Sigmoid colon (tissue), 7 donors: ENCODE measurements at regions of chr11 and their contacts with region 1.

Region 1: GRCh38 chr11:19116971-19117750 is at the start of gene ZDHHC13:
- DNase-seq: peak; percentile 95
- H3K4me3 ChIP-seq: peak within 1 kb of the TSS; percentile 84 to 95 (median 92)
- H3K27ac ChIP-seq: peak within 1 kb of the TSS; percentile 47 to 77 (median 62)
- H3K4me1 ChIP-seq: peaks cover 0 to 23% (median 3%) of the 10 kb centered on the region in 4 donors
- H3K27me3 ChIP-seq: no peaks in the 10 kb centered on the region
- CTCF ChIP-seq: no peak
- EP300 ChIP-seq: no peak
- POLR2A ChIP-seq: peak in 1 of 2 donors; percentile 30
- total RNA-seq, gene ZDHHC13: 7.2 to 8.7 (median 7.9) TPM

Region 2: GRCh38 chr11:18243783-18244362 is 873.3 kb before region 1 on chr11:
- intact Hi-C with region 1: no loop called
- DNase-seq: no peak
- H3K4me3 ChIP-seq: no peak overlapping the region
- H3K27ac ChIP-seq: no peak overlapping the region
- H3K4me1 ChIP-seq: no peaks in the 10 kb centered on the region
- H3K27me3 ChIP-seq: no peaks in the 10 kb centered on the region
- CTCF ChIP-seq: peak in 2 of 4 experiments; percentile 8 to 43
- EP300 ChIP-seq: no peak
- POLR2A ChIP-seq: no peak

Region 3: GRCh38 chr11:19076744-19077589 is 40.2 kb before region 1 on chr11:
- intact Hi-C with region 1: loop called (anchors 2 kb)
- DNase-seq: no peak
- H3K4me3 ChIP-seq: no peak overlapping the region
- H3K27ac ChIP-seq: no peak overlapping the region
- H3K4me1 ChIP-seq: peaks cover 0 to 9% (median 9%) of the 10 kb centered on the region in 4 donors
- H3K27me3 ChIP-seq: no peaks in the 10 kb centered on the region
- CTCF ChIP-seq: peak; percentile 45 to 98 (median 78)
- EP300 ChIP-seq: no peak
- POLR2A ChIP-seq: no peak

Region 4: DNA sequence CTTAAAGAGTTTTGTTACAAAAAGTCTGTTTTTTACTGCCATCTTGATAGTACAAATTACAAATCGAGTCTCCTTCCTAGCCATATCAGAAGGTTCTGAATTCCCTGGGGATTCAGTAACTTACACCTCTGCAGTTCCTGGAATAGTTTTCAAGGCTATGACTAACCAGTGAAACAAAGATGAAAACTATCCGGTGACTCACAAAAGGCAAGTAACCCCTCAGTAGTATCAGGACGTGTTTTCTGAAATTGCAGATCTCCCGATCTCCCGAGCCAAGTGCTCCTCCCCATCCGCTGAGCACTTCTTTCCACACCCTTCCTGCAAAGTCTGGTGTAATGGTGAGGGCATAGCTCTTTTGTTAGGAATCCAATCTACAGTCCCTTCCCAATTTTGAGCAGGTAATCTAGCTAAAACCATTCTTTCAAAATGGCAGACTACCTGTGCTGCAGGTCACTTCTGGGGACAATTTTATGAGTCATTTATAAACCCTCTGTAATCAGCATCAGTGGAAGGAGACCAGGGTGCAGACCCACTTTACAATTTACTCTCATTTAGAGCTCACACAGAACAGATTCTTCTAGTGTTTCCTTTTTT is 115.8 kb after region 1 on chr11:
- intact Hi-C with region 1: loop called (anchors 10 kb)
- DNase-seq: no peak
- H3K4me3 ChIP-seq: no peak overlapping the region
- H3K27ac ChIP-seq: no peak overlapping the region
- H3K4me1 ChIP-seq: no peaks in the 10 kb centered on the region
- H3K27me3 ChIP-seq: peaks cover 0 to 8% (median 5%) of the 10 kb centered on the region in 3 donors
- CTCF ChIP-seq: no peak
- EP300 ChIP-seq: no peak
- POLR2A ChIP-seq: no peak